Mammary epithelial cell (primary cell): ENCODE measurements at regions of chr9 and their contacts with region 1.

Region 1: GRCh38 chr9:120842690-120843499 is at the start of gene PSMD5:
- DNase-seq: peak; percentile 99
- H3K4me3 ChIP-seq: peak within 1 kb of the TSS; percentile 58 to 86 (median 83)
- H3K27ac ChIP-seq: peak within 1 kb of the TSS; percentile 85
- H3K4me1 ChIP-seq: peaks cover 17% of the 10 kb centered on the region
- H3K27me3 ChIP-seq: no peaks in the 10 kb centered on the region
- CTCF ChIP-seq: no peak
- total RNA-seq, gene PSMD5: 38.2 to 73.0 TPM

Region 2: GRCh38 chr9:120619751-120620655 is 222.9 kb before region 1 on chr9:
- CTCF ChIA-PET with region 1: no interaction called
- dilution Hi-C with region 1: no loop called
- in situ Hi-C with region 1: no loop called
- intact Hi-C with region 1: loop called (anchors 10 kb)
- DNase-seq: peak; percentile 55
- H3K4me3 ChIP-seq: no peak overlapping the region
- H3K27ac ChIP-seq: peak overlapping the region; percentile 7
- H3K4me1 ChIP-seq: peaks cover 18% of the 10 kb centered on the region
- H3K27me3 ChIP-seq: no peaks in the 10 kb centered on the region
- CTCF ChIP-seq: peak; percentile 74 to 77

Region 3: DNA sequence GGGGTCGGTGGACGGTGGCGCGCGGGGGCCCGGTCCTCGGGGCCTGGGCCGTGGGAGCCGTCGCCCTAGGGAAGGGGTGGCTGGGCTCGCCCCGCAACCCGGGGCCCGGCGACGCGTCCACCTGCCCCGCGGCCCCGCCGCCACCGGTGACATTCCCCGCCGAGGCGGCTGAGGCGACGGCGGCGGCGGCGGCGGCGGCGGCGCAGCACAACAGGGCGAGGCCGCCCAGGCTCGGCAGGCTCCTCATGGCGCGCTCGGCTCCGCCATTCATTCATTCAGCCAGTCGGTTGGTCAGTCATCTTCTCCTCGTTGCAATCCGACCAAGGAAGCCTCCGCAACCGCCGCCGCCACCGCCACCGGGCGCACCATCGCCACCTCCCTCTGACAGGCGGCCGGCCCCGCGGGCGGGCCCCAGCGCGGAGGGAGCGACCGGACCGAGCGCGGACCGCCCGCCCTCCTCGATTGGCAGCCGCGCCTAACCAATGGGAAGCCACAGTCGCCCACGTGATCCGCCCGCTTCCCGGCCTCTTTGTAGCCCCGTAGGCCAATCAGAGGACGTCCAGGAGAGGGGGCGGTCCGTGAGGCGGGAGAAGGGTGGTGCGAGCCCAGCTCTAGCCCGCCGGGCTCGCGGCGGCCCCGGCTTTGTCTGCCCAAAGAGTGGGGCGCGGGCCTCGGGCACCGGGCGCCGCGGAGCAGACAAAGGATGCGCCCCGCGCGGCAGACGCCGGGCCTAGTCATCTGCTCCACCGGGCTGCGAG is 128.6 kb before region 1 on chr9 and contains the start of gene MEGF9:
- CTCF ChIA-PET with region 1: no interaction called
- dilution Hi-C with region 1: no loop called
- in situ Hi-C with region 1: no loop called
- intact Hi-C with region 1: loop called (anchors 5 kb)
- DNase-seq: peak; percentile 97
- H3K4me3 ChIP-seq: peak within 1 kb of the TSS; percentile 85 to 90 (median 89)
- H3K27ac ChIP-seq: peak within 1 kb of the TSS; percentile 57
- H3K4me1 ChIP-seq: peaks cover 27% of the 10 kb centered on the region
- H3K27me3 ChIP-seq: no peaks in the 10 kb centered on the region
- CTCF ChIP-seq: no peak
- total RNA-seq, gene MEGF9: 10.9 to 31.5 TPM

Region 4: DNA sequence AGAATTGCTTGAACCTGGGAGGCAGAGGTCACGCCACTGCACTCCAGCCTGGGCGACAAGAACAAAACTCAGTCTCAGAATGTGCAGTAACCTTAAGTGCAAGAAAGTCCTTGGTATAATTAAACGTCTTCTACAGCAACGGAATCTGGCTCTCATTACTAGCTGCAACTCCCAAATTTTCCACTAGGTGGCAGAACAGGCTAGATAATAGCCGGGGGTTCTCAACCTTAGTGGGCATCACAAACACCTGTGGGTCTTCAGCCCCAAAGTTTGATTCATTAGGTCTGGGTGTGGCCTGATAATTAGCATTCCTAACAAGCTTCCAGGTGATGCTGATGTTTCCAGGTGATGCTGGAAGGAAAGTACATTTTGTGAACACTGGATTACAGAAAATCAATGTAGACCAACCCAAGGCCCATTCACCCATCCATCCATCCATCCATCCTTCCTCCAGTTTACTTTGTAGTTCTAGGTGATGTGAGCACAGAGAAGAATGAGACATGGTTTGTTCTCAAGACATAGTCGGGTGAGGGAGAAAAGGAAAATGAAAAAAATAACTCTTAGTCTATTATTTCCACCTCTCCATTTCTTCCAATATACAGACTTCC is 87.0 kb before region 1 on chr9:
- CTCF ChIA-PET with region 1: no interaction called
- dilution Hi-C with region 1: no loop called
- in situ Hi-C with region 1: no loop called
- intact Hi-C with region 1: loop called (anchors 1 kb)
- DNase-seq: peak; percentile 35
- H3K4me3 ChIP-seq: no peak overlapping the region
- H3K27ac ChIP-seq: no peak overlapping the region
- H3K4me1 ChIP-seq: no peaks in the 10 kb centered on the region
- H3K27me3 ChIP-seq: no peaks in the 10 kb centered on the region
- CTCF ChIP-seq: peak; percentile 87

Region 5: GRCh38 chr9:120774722-120775121 is 68.2 kb before region 1 on chr9:
- CTCF ChIA-PET with region 1: no interaction called
- dilution Hi-C with region 1: no loop called
- in situ Hi-C with region 1: no loop called
- intact Hi-C with region 1: loop called (anchors 5 kb)
- DNase-seq: no peak
- H3K4me3 ChIP-seq: no peak overlapping the region
- H3K27ac ChIP-seq: no peak overlapping the region
- H3K4me1 ChIP-seq: peaks cover 26% of the 10 kb centered on the region
- H3K27me3 ChIP-seq: no peaks in the 10 kb centered on the region
- CTCF ChIP-seq: no peak

Region 6: DNA sequence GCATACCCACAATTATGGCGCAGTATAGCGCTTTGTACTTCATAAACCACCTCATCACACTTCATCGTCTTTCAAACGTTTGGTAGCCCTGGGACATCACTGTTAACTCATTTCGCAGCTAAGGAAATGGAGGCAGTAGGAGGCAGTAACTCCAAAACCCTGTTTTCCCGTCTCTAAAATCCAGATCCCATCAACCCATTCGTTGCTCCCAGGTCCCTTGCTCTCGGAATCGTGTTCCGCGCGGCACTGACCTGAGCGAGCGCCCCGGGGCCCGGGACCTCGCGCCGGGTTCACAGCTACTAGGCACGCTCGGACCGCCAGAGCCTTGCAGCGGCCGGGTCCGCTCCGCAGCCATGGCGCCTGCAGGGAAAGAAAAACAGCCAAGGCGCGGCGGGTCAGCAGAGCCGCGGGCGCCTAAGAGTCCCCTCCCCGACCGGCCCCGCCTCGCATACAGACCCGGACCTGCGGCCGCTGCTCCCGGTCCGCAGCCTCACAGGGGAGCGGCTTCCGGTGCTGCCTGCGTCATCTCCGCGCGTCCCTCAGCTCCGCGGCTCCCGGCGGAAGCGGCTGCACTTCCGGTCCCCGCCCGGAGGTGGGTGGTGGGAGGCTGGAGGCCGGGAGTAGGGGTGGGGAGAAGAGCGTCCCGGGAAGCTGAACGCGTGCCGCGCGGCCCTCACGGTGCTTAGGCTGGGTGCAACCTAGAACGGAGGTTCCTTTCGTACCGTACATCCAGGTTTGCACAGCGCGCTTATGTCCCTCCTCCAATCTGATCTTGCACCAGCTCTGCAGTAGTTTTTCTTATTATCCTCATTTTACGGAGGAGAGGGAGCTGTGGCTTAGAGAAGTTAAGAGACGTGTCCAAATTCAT is 49.8 kb before region 1 on chr9 and contains the start of gene FBXW2:
- CTCF ChIA-PET with region 1: interaction called, 6 read pairs
- dilution Hi-C with region 1: no loop called
- in situ Hi-C with region 1: no loop called
- intact Hi-C with region 1: loop called (anchors 5 kb)
- DNase-seq: peak; percentile 90
- H3K4me3 ChIP-seq: peak within 1 kb of the TSS; percentile 74 to 100 (median 96)
- H3K27ac ChIP-seq: peak within 1 kb of the TSS; percentile 92
- H3K4me1 ChIP-seq: peaks cover 19% of the 10 kb centered on the region
- H3K27me3 ChIP-seq: no peaks in the 10 kb centered on the region
- CTCF ChIP-seq: no peak
- total RNA-seq, gene FBXW2: 39.3 to 70.1 TPM

Region 7: GRCh38 chr9:120868676-120869359 is 25.9 kb after region 1 on chr9:
- CTCF ChIA-PET with region 1: no interaction called
- dilution Hi-C with region 1: no loop called
- in situ Hi-C with region 1: no loop called
- intact Hi-C with region 1: loop called (anchors 1 kb)
- DNase-seq: peak; percentile 98
- H3K4me3 ChIP-seq: peak overlapping the region; percentile 48 to 85 (median 50)
- H3K27ac ChIP-seq: peak overlapping the region; percentile 34
- H3K4me1 ChIP-seq: peaks cover 23% of the 10 kb centered on the region
- H3K27me3 ChIP-seq: no peaks in the 10 kb centered on the region
- CTCF ChIP-seq: peak; percentile 6 to 64